ENCODE measurements at regions of chr2 and their contacts with region 1.

Region 1: GRCh38 chr2:38377050-38377828 is at the start of gene ATL2:
- DNase-seq: peak; percentile 94
- H3K4me3 Mint-ChIP-seq: peak within 1 kb of the TSS; percentile 73
- H3K27ac Mint-ChIP-seq: peak within 1 kb of the TSS; percentile 85
- H3K4me1 Mint-ChIP-seq: peaks cover 19% of the 10 kb centered on the region
- H3K27me3 Mint-ChIP-seq: no peaks in the 10 kb centered on the region
- CTCF ChIP-seq: peak; percentile 12
- total RNA-seq, gene ATL2: 118 and 129 TPM in 2 replicates

Region 2: GRCh38 chr2:38323623-38324022 is 53.6 kb before region 1 on chr2:
- CTCF ChIA-PET with region 1: no interaction called
- intact Hi-C with region 1: loop called (anchors 5 kb)
- DNase-seq: no peak
- H3K4me3 Mint-ChIP-seq: no peak overlapping the region
- H3K27ac Mint-ChIP-seq: no peak overlapping the region
- H3K4me1 Mint-ChIP-seq: peaks cover 44% of the 10 kb centered on the region
- H3K27me3 Mint-ChIP-seq: no peaks in the 10 kb centered on the region
- CTCF ChIP-seq: no peak

Region 3: GRCh38 chr2:38336619-38337018 is 40.6 kb before region 1 on chr2:
- CTCF ChIA-PET with region 1: no interaction called
- intact Hi-C with region 1: no loop called
- DNase-seq: no peak
- H3K4me3 Mint-ChIP-seq: no peak overlapping the region
- H3K27ac Mint-ChIP-seq: no peak overlapping the region
- H3K4me1 Mint-ChIP-seq: no peaks in the 10 kb centered on the region
- H3K27me3 Mint-ChIP-seq: no peaks in the 10 kb centered on the region
- CTCF ChIP-seq: no peak

Region 4: GRCh38 chr2:38394903-38395341 is 17.7 kb after region 1 on chr2:
- CTCF ChIA-PET with region 1: interaction called, 8 read pairs
- intact Hi-C with region 1: loop called (anchors 1 kb)
- DNase-seq: no peak
- H3K4me3 Mint-ChIP-seq: no peak overlapping the region
- H3K27ac Mint-ChIP-seq: peak overlapping the region; percentile 89
- H3K4me1 Mint-ChIP-seq: peaks cover 29% of the 10 kb centered on the region
- H3K27me3 Mint-ChIP-seq: no peaks in the 10 kb centered on the region
- CTCF ChIP-seq: no peak

Region 5: GRCh38 chr2:38438883-38439612 is 61.8 kb after region 1 on chr2:
- CTCF ChIA-PET with region 1: interaction called, 47 read pairs
- intact Hi-C with region 1: loop called (anchors 1 kb)
- DNase-seq: peak; percentile 84
- H3K4me3 Mint-ChIP-seq: peak overlapping the region; percentile 34
- H3K27ac Mint-ChIP-seq: peak overlapping the region; percentile 95
- H3K4me1 Mint-ChIP-seq: peaks cover 76% of the 10 kb centered on the region
- H3K27me3 Mint-ChIP-seq: no peaks in the 10 kb centered on the region
- CTCF ChIP-seq: no peak

Region 6: GRCh38 chr2:38508311-38509039 is 131.2 kb after region 1 on chr2:
- CTCF ChIA-PET with region 1: interaction called, 13 read pairs
- intact Hi-C with region 1: loop called (anchors 1 kb)
- DNase-seq: peak; percentile 86
- H3K4me3 Mint-ChIP-seq: no peak overlapping the region
- H3K27ac Mint-ChIP-seq: no peak overlapping the region
- H3K4me1 Mint-ChIP-seq: peaks cover 21% of the 10 kb centered on the region
- H3K27me3 Mint-ChIP-seq: no peaks in the 10 kb centered on the region
- CTCF ChIP-seq: peak; percentile 46

Region 7: DNA sequence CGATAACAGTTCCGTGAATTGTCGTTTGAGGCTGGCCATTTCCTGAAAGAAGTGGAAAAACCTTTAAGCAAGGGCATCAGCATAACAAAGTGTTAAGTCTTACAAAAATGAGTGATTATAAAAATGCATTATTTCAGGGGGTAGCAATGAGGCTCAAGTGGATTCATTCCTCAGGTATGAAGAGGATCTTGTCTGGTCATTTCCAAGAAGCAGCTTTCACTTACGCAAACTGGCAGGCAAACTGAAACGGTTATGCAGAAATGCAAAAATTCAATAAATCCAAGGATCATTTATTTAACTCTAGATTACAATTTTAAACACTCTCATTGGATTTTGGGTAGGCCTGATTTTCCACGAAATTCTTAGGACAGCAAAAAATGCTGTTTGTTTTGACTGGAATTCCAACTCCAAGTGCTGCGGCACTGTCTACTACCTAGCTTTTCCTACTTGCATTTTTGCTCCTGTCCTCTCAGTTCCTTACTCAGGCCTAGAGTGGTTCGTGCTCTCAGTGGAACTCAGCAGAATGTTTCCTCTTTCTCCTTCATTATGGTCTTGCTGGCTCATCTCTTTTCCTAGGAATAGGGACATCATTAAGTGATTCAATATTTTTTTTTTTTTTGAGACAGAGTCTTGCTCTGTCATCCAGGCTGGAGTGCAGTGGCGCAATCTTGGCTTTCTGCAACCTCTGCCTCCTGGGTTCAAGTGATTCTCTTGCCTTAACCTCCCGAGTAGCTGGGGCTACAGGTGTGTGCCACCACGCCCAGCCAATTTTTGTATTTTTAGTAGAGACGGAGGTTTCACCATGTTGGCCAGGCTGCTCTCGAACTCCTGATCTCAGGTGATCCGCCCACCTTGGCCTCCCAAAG is 438.6 kb after region 1 on chr2:
- CTCF ChIA-PET with region 1: no interaction called
- intact Hi-C with region 1: no loop called
- DNase-seq: no peak
- H3K4me3 Mint-ChIP-seq: no peak overlapping the region
- H3K27ac Mint-ChIP-seq: no peak overlapping the region
- H3K4me1 Mint-ChIP-seq: no peaks in the 10 kb centered on the region
- H3K27me3 Mint-ChIP-seq: no peaks in the 10 kb centered on the region
- CTCF ChIP-seq: no peak

Region 8: GRCh38 chr2:39141331-39142271 is 764.4 kb after region 1 on chr2:
- CTCF ChIA-PET with region 1: no interaction called
- intact Hi-C with region 1: no loop called
- DNase-seq: no peak
- H3K4me3 Mint-ChIP-seq: no peak overlapping the region
- H3K27ac Mint-ChIP-seq: no peak overlapping the region
- H3K4me1 Mint-ChIP-seq: no peaks in the 10 kb centered on the region
- H3K27me3 Mint-ChIP-seq: no peaks in the 10 kb centered on the region
- CTCF ChIP-seq: no peak

Measured in Calu3 (cell line).